PC-3 (cell line): ENCODE measurements at regions of chr11 and their contacts with region 1.

Region 1: DNA sequence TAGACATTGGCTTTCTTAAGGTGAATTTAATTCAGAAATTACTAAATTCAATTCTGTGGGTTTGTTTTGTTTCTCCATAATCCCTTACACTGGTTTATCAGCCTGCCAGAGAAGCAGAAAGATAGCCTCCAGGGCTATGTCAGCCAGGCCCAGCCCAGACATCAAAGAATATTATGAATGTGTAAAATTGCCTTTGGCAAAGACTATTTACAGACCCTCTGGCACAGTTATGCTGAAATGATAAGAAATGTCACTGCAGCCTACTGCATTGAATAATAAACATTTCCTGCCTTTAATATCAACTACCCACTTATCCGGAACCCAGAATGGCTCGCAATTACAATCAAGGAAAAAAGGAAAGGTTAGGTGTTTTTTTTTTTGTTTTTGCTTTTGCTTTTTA is 562.5 kb upstream of the LRRC4C start:
- DNase-seq: no peak
- ATAC-seq: no peak
- H3K4me3 ChIP-seq: no peak overlapping the region
- H3K27ac ChIP-seq: no peak overlapping the region
- H3K4me1 ChIP-seq: no peaks in the 10 kb centered on the region
- H3K27me3 ChIP-seq: no peaks in the 10 kb centered on the region
- CTCF ChIP-seq: no peak

Region 2: GRCh38 chr11:41999066-41999465 is 22.8 kb before region 1 on chr11:
- CTCF ChIA-PET with region 1: no interaction called
- POLR2A ChIA-PET with region 1: no interaction called
- intact Hi-C with region 1: no loop called
- DNase-seq: no peak
- ATAC-seq: no peak
- H3K4me3 ChIP-seq: no peak overlapping the region
- H3K27ac ChIP-seq: no peak overlapping the region
- H3K4me1 ChIP-seq: no peaks in the 10 kb centered on the region
- H3K27me3 ChIP-seq: no peaks in the 10 kb centered on the region
- CTCF ChIP-seq: no peak

Region 3: GRCh38 chr11:42055606-42056005 is 33.7 kb after region 1 on chr11:
- CTCF ChIA-PET with region 1: no interaction called
- POLR2A ChIA-PET with region 1: interaction called, 12 read pairs
- intact Hi-C with region 1: no loop called
- DNase-seq: no peak
- ATAC-seq: no peak
- H3K4me3 ChIP-seq: no peak overlapping the region
- H3K27ac ChIP-seq: no peak overlapping the region
- H3K4me1 ChIP-seq: peaks cover 11% of the 10 kb centered on the region; the same call in 1 of the 2 replicates
- H3K27me3 ChIP-seq: no peaks in the 10 kb centered on the region
- CTCF ChIP-seq: no peak